Cardiac septum (tissue), 1 donor: ENCODE measurements at regions of chr14 and their contacts with region 1.

Region 1: DNA sequence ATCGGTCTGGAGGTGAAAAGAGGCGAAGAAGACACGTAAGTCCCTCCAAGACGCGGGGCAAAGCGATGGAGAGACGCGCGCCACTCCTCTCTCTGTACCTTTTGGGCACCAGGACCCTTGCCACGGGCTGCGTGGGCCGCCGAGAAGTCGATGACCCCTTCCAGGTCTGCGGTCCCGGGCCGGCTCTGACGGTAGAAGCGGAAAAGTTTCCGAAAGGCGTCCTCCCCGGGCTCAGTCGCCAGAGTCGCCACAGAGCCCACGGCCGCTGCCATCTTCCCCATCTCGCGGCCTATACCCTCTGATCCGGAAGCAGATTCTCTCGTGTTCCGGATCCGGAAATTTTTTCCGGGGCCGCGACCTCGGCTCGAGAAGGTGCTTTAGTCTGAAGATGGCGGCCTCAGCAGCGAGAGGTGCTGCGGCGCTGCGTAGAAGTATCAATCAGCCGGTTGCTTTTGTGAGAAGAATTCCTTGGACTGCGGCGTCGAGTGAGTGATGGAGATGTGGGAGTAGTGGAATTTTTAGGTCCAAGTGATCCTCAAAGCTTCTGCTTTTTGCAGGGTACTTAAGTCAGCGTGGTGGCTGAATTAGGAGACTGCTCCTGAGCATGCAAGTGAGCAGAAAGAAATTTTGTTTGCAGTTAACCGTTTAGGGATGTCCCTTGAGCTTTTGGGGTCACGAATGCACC is at the starts of genes ALKBH1 and SLIRP:
- DNase-seq: peak; percentile 94
- total RNA-seq, gene ALKBH1: 8.3 TPM
- total RNA-seq, gene SLIRP: 129 TPM

Region 2: GRCh38 chr14:77457522-77458290 is 250.2 kb before region 1 on chr14 and contains the starts of genes AHSA1 and VIPAS39:
- intact Hi-C with region 1: loop called (anchors 5 kb)
- DNase-seq: peak; percentile 98
- total RNA-seq, gene AHSA1: 138 TPM
- total RNA-seq, gene VIPAS39: 12.5 TPM

Region 3: GRCh38 chr14:77654001-77654441 is 53.8 kb before region 1 on chr14:
- intact Hi-C with region 1: loop called (anchors 2 kb)
- DNase-seq: no peak